ENCODE measurements at regions of chr4 and their contacts with region 1.

Region 1: GRCh38 chr4:43875655-43876054 is 573.0 kb downstream of the KCTD8 start:
- DNase-seq: no peak
- ATAC-seq: no peak
- H3K4me3 ChIP-seq: no peak overlapping the region
- H3K4me3 Mint-ChIP-seq: no peak overlapping the region
- H3K27ac ChIP-seq: no peak overlapping the region
- H3K27ac Mint-ChIP-seq: no peak overlapping the region
- H3K4me1 ChIP-seq: no peaks in the 10 kb centered on the region
- H3K4me1 Mint-ChIP-seq: no peaks in the 10 kb centered on the region
- H3K27me3 ChIP-seq: no peaks in the 10 kb centered on the region
- H3K27me3 Mint-ChIP-seq: no peaks in the 10 kb centered on the region
- CTCF ChIP-seq: no peak

Region 2: GRCh38 chr4:43348591-43348990 is 527.1 kb before region 1 on chr4:
- CTCF ChIA-PET with region 1: no interaction called
- POLR2A ChIA-PET with region 1: no interaction called
- intact Hi-C with region 1: no loop called
- DNase-seq: no peak
- ATAC-seq: no peak
- H3K4me3 ChIP-seq: no peak overlapping the region
- H3K4me3 Mint-ChIP-seq: no peak overlapping the region
- H3K27ac ChIP-seq: no peak overlapping the region
- H3K27ac Mint-ChIP-seq: no peak overlapping the region
- H3K4me1 ChIP-seq: no peaks in the 10 kb centered on the region
- H3K4me1 Mint-ChIP-seq: no peaks in the 10 kb centered on the region
- H3K27me3 ChIP-seq: no peaks in the 10 kb centered on the region
- H3K27me3 Mint-ChIP-seq: no peaks in the 10 kb centered on the region
- CTCF ChIP-seq: no peak

Region 3: DNA sequence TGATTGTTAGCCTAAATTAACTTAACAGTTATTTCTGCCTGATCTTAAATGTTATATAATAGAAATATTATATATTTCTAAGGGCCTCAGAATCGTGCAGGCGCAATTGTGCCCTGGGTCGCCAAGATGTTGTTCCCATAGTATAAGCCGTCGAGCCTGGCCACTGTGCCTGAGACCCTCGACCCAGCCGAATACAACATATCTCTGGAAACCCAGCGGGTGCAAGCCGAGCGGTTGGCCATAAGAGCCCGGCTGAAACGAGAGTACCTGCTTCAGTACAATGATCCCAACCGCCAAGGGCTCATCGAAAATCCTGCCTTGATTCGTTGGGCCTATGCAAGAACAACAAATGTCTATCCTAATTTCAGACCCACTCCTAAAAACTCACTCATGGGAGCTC is 23.2 kb after region 1 on chr4:
- CTCF ChIA-PET with region 1: no interaction called
- POLR2A ChIA-PET with region 1: no interaction called
- intact Hi-C with region 1: loop called in 1 of 2 experiments (anchors 1 kb)
- DNase-seq: no peak
- ATAC-seq: no peak
- H3K4me3 ChIP-seq: no peak overlapping the region
- H3K4me3 Mint-ChIP-seq: no peak overlapping the region
- H3K27ac ChIP-seq: no peak overlapping the region
- H3K27ac Mint-ChIP-seq: no peak overlapping the region
- H3K4me1 ChIP-seq: no peaks in the 10 kb centered on the region
- H3K4me1 Mint-ChIP-seq: no peaks in the 10 kb centered on the region
- H3K27me3 ChIP-seq: no peaks in the 10 kb centered on the region
- H3K27me3 Mint-ChIP-seq: no peaks in the 10 kb centered on the region
- CTCF ChIP-seq: no peak

Measured in CD8-positive, alpha-beta T cell (primary cell).